ENCODE measurements at regions of chr5 and their contacts with region 1.

Region 1: GRCh38 chr5:120457839-120458507 is 6.1 kb upstream of the PRR16 start:
- DNase-seq: peak; percentile 87

Region 2: GRCh38 chr5:120152472-120152871 is 305.5 kb before region 1 on chr5:
- intact Hi-C with region 1: loop called (anchors 5 kb)
- DNase-seq: no peak

Region 3: GRCh38 chr5:120368923-120369715 is 88.9 kb before region 1 on chr5:
- intact Hi-C with region 1: no loop called
- DNase-seq: no peak